B cell (primary cell): ENCODE measurements at regions of chr3 and their contacts with region 1.

Region 1: GRCh38 chr3:130892759-130893375 is 1.0 kb upstream of the ATP2C1 start:
- DNase-seq: peak; percentile 85
- ATAC-seq: peak; percentile 44
- H3K4me3 ChIP-seq: peak overlapping the region; percentile 71 to 98 (median 93)
- H3K4me3 Mint-ChIP-seq: peak overlapping the region; percentile 98
- H3K27ac ChIP-seq: peak overlapping the region; percentile 89 to 96
- H3K27ac Mint-ChIP-seq: peak overlapping the region; percentile 99
- H3K4me1 ChIP-seq: peaks cover 11% of the 10 kb centered on the region in 2 donors
- H3K4me1 Mint-ChIP-seq: peaks cover 32% of the 10 kb centered on the region
- H3K27me3 ChIP-seq: no peaks in the 10 kb centered on the region
- H3K27me3 Mint-ChIP-seq: no peaks in the 10 kb centered on the region
- CTCF ChIP-seq: peak; percentile 91

Region 2: GRCh38 chr3:130746246-130747039 is 146.4 kb before region 1 on chr3 and contains the start of gene PIK3R4:
- CTCF ChIA-PET with region 1: interaction called, 9 read pairs
- POLR2A ChIA-PET with region 1: interaction called, 5 read pairs
- intact Hi-C with region 1: loop called (anchors 1 kb)
- DNase-seq: peak; percentile 97
- ATAC-seq: peak; percentile 85
- H3K4me3 ChIP-seq: peak within 1 kb of the TSS; percentile 71 to 96 (median 95)
- H3K4me3 Mint-ChIP-seq: peak within 1 kb of the TSS; percentile 96
- H3K27ac ChIP-seq: peak within 1 kb of the TSS; percentile 76 to 93
- H3K27ac Mint-ChIP-seq: peak within 1 kb of the TSS; percentile 95
- H3K4me1 ChIP-seq: peaks cover 24 to 28% of the 10 kb centered on the region in 2 donors
- H3K4me1 Mint-ChIP-seq: peaks cover 42% of the 10 kb centered on the region
- H3K27me3 ChIP-seq: no peaks in the 10 kb centered on the region
- H3K27me3 Mint-ChIP-seq: no peaks in the 10 kb centered on the region
- CTCF ChIP-seq: no peak
- total RNA-seq, gene PIK3R4: 27.1 and 32.8 TPM in 2 replicates

Region 3: DNA sequence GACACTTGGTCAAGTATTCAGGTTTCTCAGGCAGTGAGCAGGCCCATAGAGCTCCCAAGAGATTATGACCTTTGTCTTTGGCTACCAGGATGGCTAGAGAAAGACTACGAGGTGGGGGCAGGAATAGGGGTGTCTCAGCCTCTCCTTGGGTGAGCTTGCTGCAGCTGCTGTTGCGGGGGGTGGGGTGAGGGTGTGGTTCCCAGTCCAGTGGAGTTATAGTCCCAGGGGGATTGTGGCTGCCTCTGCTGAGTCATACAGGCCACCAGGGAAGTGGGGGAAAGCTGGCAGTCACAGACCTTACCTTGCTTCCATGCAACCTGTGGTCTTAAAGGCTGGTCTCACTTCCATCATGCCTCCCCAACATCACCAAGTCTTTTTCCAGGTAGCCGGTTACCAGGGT is 32.8 kb after region 1 on chr3:
- CTCF ChIA-PET with region 1: interaction called, 6 read pairs
- POLR2A ChIA-PET with region 1: interaction called, 5 read pairs
- intact Hi-C with region 1: loop called (anchors 5 kb)
- DNase-seq: peak; percentile 55
- ATAC-seq: peak; percentile 81
- H3K4me3 ChIP-seq: no peak overlapping the region
- H3K4me3 Mint-ChIP-seq: peak overlapping the region; percentile 35
- H3K27ac ChIP-seq: no peak overlapping the region
- H3K27ac Mint-ChIP-seq: peak overlapping the region; percentile 68
- H3K4me1 ChIP-seq: peaks cover 17 to 22% of the 10 kb centered on the region in 2 donors
- H3K4me1 Mint-ChIP-seq: peaks cover 52% of the 10 kb centered on the region
- H3K27me3 ChIP-seq: no peaks in the 10 kb centered on the region
- H3K27me3 Mint-ChIP-seq: no peaks in the 10 kb centered on the region
- CTCF ChIP-seq: no peak

Region 4: DNA sequence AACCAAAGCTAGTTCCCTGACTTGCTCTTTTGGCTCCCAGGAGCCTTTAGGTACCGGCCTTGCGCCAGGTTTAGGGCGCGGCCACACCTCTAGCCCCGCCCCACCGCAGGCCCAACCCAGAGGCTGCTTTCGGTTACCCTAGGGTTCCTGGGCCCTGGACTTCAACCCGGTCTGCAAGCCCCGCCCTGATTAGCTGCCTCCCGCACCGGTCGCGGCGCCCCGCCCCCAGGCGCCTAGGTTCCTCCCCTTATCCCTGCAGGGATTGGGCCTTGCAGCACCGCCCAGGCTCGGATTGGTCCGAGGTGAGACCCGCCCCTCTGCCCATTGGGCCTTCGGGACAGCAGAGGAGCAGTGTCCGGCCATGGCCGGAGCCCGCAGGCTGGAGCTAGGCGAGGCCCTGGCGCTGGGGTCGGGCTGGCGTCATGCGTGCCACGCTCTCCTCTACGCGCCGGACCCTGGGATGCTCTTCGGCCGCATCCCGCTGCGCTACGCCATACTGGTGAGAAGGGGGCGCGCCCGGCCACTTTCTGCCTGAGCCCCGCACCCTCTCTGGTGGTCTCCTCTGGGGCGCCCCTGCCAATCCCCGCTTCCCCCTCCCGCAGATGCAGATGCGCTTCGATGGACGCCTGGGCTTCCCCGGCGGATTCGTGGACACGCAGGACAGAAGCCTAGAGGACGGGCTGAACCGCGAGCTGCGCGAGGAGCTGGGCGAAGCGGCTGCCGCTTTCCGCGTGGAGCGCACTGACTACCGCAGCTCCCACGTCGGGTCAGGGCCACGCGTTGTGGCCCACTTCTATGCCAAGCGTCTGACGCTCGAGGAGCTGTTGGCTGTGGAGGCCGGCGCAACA is 488.8 kb after region 1 on chr3 and contains the start of gene NUDT16:
- CTCF ChIA-PET with region 1: no interaction called
- POLR2A ChIA-PET with region 1: no interaction called
- intact Hi-C with region 1: loop called (anchors 1 kb)
- DNase-seq: peak; percentile 97
- ATAC-seq: peak; percentile 98
- H3K4me3 ChIP-seq: peak within 1 kb of the TSS; percentile 65 to 99 (median 92)
- H3K4me3 Mint-ChIP-seq: peak within 1 kb of the TSS; percentile 98
- H3K27ac ChIP-seq: peak within 1 kb of the TSS; percentile 57 to 59
- H3K27ac Mint-ChIP-seq: peak within 1 kb of the TSS; percentile 96
- H3K4me1 ChIP-seq: peaks cover 17 to 26% of the 10 kb centered on the region in 2 donors
- H3K4me1 Mint-ChIP-seq: peaks cover 26% of the 10 kb centered on the region
- H3K27me3 ChIP-seq: no peaks in the 10 kb centered on the region
- H3K27me3 Mint-ChIP-seq: no peaks in the 10 kb centered on the region
- CTCF ChIP-seq: peak; percentile 39
- total RNA-seq, gene NUDT16: 17.6 and 19.1 TPM in 2 replicates